Common myeloid progenitor, CD34-positive (primary cell): ENCODE measurements at regions of chr5 and their contacts with region 1.

Region 1: DNA sequence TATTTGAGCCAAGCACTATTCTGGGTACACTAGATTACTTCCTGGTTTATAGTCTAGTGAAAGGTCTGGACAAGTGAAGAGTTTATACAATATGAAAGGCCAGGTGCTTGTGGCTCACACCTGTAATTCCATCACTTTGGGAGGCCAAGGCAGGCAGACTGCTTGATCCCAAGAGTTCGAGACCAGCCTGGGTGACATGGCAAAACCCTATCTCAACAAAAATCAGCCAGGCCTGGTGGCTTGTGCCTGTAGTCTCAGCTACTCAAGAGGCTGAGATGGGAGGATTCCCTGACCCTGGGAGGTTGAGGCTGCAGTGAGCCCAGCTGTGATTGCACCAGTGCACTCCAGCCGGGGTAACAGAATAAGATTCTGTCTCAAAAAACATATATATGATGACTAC is 9.5 kb upstream of the TXNDC15 start:
- DNase-seq: no peak
- H3K4me3 ChIP-seq: no peak overlapping the region
- H3K27ac ChIP-seq: no peak overlapping the region
- H3K4me1 ChIP-seq: no peaks in the 10 kb centered on the region
- H3K27me3 ChIP-seq: no peaks in the 10 kb centered on the region

Region 2: DNA sequence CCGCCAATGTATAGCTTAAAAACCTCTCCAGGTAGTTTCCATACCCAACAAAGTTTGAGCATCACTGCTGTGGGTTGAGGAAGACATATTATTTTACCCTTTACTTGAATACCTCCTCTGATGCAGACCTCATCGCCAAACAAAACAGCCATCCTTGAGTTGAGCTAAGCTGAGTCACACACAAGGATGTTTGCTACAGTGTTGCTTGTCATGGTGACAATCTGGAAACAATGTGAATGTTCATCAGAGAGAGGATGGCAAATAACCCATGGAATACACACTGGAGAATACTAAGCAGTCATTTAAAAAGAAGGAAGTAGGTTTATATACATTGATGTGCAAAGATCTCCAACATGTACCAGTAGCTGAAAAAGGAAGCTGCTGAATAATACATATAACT is 791.3 kb before region 1 on chr5:
- CTCF ChIA-PET with region 1: no interaction called
- POLR2A ChIA-PET with region 1: no interaction called
- DNase-seq: peak in 2 of 3 donors; percentile 32 to 44
- H3K4me3 ChIP-seq: no peak overlapping the region
- H3K27ac ChIP-seq: no peak overlapping the region
- H3K4me1 ChIP-seq: peaks cover 0 to 12% (median 10%) of the 10 kb centered on the region in 4 experiments
- H3K27me3 ChIP-seq: peaks cover 0 to 7% (median 0%) of the 10 kb centered on the region in 5 experiments

Region 3: DNA sequence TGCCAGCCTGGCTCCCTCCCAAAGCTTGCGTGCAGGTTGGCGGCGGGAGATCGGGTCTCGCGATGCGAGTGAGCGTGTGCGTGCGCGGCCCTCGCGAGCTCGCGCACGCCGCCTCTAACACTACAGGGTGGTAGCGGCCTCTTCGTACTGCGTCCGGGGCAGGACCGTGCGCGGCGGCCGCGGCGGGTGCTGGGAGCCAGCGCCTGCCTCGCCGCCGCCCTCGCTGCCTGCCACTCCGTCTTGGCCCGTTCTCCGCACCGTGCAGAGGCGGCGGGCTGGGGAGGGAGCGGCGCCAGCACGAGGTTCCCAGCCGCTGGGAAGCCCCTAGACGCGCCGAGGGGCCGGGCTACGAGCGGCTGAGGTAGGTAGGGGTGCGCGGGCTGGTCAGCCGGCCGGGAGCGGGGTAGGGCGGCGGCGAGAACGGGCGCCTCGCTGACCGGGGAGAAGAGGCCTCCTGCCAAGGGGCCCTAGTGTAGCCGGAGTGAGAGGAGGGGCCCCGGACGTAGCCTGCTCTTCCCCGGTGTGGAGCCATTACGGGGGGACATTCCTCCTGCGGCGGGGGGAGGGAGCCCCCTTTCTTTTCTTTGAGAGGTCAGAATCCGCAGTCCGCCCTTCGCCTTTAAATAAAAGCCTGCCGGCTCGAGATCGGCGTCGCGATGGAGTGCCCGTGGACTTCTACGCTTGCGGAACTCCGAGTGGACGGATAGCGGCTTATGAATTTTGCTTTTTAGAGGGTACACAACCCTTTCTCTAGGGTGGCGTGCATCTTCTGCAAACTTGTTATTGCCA is 18.7 kb before region 1 on chr5 and contains the start of gene C5orf24:
- CTCF ChIA-PET with region 1: interaction called, 11 read pairs
- POLR2A ChIA-PET with region 1: interaction called, 3 read pairs
- DNase-seq: peak; percentile 97 to 99 (median 99)
- H3K4me3 ChIP-seq: peak within 1 kb of the TSS; percentile 69 to 98 (median 84)
- H3K27ac ChIP-seq: peak within 1 kb of the TSS; percentile 86 to 95
- H3K4me1 ChIP-seq: peaks cover 11 to 20% (median 16%) of the 10 kb centered on the region in 4 experiments
- H3K27me3 ChIP-seq: no peaks in the 10 kb centered on the region

Region 4: DNA sequence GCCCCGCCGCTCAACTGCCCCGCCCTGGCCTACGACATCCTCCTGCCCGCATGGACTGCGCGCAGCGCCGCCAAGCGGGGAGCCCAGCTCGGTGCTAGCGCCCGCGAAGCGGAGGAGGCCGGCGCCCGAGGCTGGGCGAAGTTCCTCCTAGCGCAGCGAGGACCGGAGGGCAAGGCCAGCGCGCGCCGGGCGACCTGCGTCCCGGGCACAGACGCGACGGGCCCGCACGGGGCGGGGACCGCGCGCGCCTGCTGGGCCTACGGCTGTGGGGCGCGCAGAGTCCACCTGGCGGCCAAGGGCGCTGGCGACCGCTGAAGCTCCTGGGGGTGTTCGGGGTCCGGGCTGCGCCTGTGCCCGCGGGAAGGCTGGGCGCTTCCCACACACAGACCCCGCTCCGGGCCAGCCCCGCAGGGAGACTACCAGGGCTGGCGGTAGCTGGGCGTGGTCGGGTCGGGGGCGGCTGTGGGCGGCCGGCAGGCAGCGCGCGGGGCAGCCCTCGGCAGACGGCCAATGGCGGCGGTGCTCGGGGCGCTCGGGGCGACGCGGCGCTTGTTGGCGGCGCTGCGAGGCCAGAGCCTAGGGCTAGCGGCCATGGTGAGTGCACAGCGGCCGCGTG is 40.0 kb after region 1 on chr5 and contains the start of gene PCBD2:
- CTCF ChIA-PET with region 1: interaction called, 10 read pairs
- POLR2A ChIA-PET with region 1: no interaction called
- DNase-seq: peak; percentile 95 to 97 (median 97)
- H3K4me3 ChIP-seq: peak within 1 kb of the TSS; percentile 68 to 97 (median 90)
- H3K27ac ChIP-seq: peak within 1 kb of the TSS; percentile 66 to 93
- H3K4me1 ChIP-seq: peaks cover 7 to 24% (median 14%) of the 10 kb centered on the region in 4 experiments
- H3K27me3 ChIP-seq: no peaks in the 10 kb centered on the region

Region 5: DNA sequence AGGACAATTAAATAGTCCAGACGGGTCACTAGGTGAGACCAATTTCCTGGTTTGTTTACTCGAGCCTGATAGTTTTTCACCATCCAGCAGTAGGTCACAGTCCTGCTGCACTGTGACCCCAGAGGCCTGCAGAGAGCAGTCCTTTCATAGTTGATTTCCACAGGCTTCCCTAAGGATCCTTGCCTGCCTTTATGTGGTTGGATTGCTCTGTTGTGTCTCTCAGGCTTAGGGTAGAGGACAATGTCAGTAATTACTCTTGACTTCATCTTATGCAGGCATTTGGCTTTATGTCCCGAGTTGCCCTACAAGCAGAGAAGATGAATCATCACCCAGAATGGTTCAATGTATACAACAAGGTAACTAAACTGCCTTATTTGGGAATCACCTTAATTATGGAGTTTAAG is 94.1 kb after region 1 on chr5:
- CTCF ChIA-PET with region 1: no interaction called
- POLR2A ChIA-PET with region 1: no interaction called
- DNase-seq: no peak
- H3K4me3 ChIP-seq: no peak overlapping the region
- H3K27ac ChIP-seq: no peak overlapping the region
- H3K4me1 ChIP-seq: no peaks in the 10 kb centered on the region
- H3K27me3 ChIP-seq: no peaks in the 10 kb centered on the region